ENCODE measurements at regions of chr20 and their contacts with region 1.

Region 1: DNA sequence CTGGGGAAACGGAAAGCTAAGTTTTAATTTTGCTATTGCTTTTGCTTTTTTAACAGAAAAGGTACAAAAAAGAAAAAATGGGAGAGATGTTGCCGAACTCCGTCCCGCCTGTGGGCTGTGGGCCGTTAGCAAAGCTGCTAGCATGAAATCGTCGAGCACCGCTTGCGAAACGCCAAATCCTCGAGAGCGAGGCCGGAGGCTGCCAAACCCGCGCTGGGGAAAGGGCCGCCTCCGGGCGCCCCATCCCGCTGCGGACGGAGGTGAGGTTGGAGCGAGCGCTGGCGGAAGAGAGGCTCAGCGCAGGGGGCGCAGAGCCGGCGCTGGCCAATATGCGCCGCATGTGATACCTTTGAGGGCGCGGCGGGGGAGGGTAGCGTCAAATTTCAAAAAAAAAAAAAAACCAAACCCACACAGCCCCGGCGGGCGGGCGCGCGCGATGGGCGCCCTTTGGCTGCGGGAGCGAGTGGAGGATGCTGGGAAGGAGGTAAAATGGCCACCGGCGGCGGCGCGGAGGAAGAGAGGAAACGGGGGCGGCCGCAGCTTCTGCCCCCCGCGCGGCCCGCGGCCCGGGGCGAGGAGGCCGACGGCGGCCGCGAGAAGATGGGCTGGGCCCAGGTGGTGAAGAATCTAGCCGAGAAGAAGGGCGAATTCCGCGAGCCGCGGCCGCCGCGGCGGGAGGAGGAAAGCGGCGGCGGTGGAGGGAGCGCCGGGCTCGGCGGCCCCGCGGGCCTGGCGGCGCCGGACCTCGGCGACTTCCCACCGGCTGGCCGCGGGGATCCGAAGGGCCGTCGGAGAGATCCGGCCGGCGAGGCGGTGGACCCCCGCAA is at the start of gene ZCCHC3:
- DNase-seq: peak; percentile 59
- ATAC-seq: peak; percentile 86
- H3K4me3 ChIP-seq: peak within 1 kb of the TSS; percentile 94
- H3K27ac ChIP-seq: peak within 1 kb of the TSS; percentile 90
- H3K4me1 ChIP-seq: peaks cover 25% of the 10 kb centered on the region
- H3K27me3 ChIP-seq: no peaks in the 10 kb centered on the region
- CTCF ChIP-seq: peak; percentile 21 to 23 (median 23); a peak in 2 of 6 replicates
- EP300 ChIP-seq: no peak
- POLR2A ChIP-seq: peak; percentile 83
- RAD21 ChIP-seq: no peak
- polyA plus RNA-seq, gene ZCCHC3: 5.3 to 10.8 TPM

Region 2: GRCh38 chr20:199996-200395 is 97.3 kb before region 1 on chr20:
- CTCF ChIA-PET with region 1: no interaction called
- POLR2A ChIA-PET with region 1: no interaction called
- RAD21 ChIA-PET with region 1: no interaction called
- SMC1A ChIA-PET with region 1: no interaction called
- in situ Hi-C with region 1: no loop called
- intact Hi-C with region 1: no loop called
- DNase-seq: no peak
- ATAC-seq: no peak
- H3K4me3 ChIP-seq: no peak overlapping the region
- H3K27ac ChIP-seq: no peak overlapping the region
- H3K4me1 ChIP-seq: no peaks in the 10 kb centered on the region
- H3K27me3 ChIP-seq: peaks cover 0 to 3% of the 10 kb centered on the region in 2 experiments; a peak in 2 of 4 replicates
- CTCF ChIP-seq: no peak
- EP300 ChIP-seq: no peak
- POLR2A ChIP-seq: no peak
- RAD21 ChIP-seq: no peak

Region 3: GRCh38 chr20:309841-310644 is 12.7 kb after region 1 on chr20:
- CTCF ChIA-PET with region 1: interaction called, 12 read pairs
- POLR2A ChIA-PET with region 1: interaction called, 10 read pairs
- RAD21 ChIA-PET with region 1: interaction called, 10 read pairs
- SMC1A ChIA-PET with region 1: interaction called, 8 read pairs
- in situ Hi-C with region 1: no loop called
- intact Hi-C with region 1: no loop called
- DNase-seq: no peak
- ATAC-seq: peak; percentile 100
- H3K4me3 ChIP-seq: peak overlapping the region; percentile 46
- H3K27ac ChIP-seq: no peak overlapping the region; the same call in 1 of the 2 replicates
- H3K4me1 ChIP-seq: peaks cover 4% of the 10 kb centered on the region; the same call in 1 of the 2 replicates
- H3K27me3 ChIP-seq: no peaks in the 10 kb centered on the region
- CTCF ChIP-seq: no peak
- EP300 ChIP-seq: no peak
- POLR2A ChIP-seq: no peak
- RAD21 ChIP-seq: no peak

Measured in GM12878 (cell line).